Aorta (tissue), 5 donors: ENCODE measurements at regions of chr1 and their contacts with region 1.

Region 1: GRCh38 chr1:114716304-114717170 is at the start of gene NRAS:
- DNase-seq: peak; percentile 96 to 99
- ATAC-seq: peak; percentile 99
- H3K4me3 ChIP-seq: peak within 1 kb of the TSS; percentile 91 to 99
- H3K27ac ChIP-seq: peak within 1 kb of the TSS; percentile 68 to 79
- H3K4me1 ChIP-seq: no peaks in the 10 kb centered on the region
- H3K27me3 ChIP-seq: no peaks in the 10 kb centered on the region
- total RNA-seq, gene NRAS: 17.9 to 21.1 TPM

Region 2: GRCh38 chr1:114581335-114582287 is 134.9 kb before region 1 on chr1 and contains the start of gene BCAS2:
- intact Hi-C with region 1: loop called in 1 of 2 experiments (anchors 10 kb)
- DNase-seq: peak; percentile 97 to 98
- ATAC-seq: peak; percentile 98
- H3K4me3 ChIP-seq: peak within 1 kb of the TSS; percentile 32 to 89
- H3K27ac ChIP-seq: peak within 1 kb of the TSS; percentile 15 to 71
- H3K4me1 ChIP-seq: peaks cover 0 to 4% of the 10 kb centered on the region in 2 donors
- H3K27me3 ChIP-seq: no peaks in the 10 kb centered on the region
- total RNA-seq, gene BCAS2: 23.9 to 29.8 TPM

Region 3: GRCh38 chr1:114670083-114671010 is 46.2 kb before region 1 on chr1:
- intact Hi-C with region 1: loop called in 1 of 2 experiments (anchors 5 kb)
- DNase-seq: peak; percentile 96 to 98
- ATAC-seq: peak; percentile 100
- H3K4me3 ChIP-seq: peak overlapping the region; percentile 65 to 97
- H3K27ac ChIP-seq: peak overlapping the region in 1 of 2 donors; percentile 24
- H3K4me1 ChIP-seq: no peaks in the 10 kb centered on the region
- H3K27me3 ChIP-seq: no peaks in the 10 kb centered on the region

Region 4: GRCh38 chr1:114757455-114758250 is 41.1 kb after region 1 on chr1 and contains the start of gene CSDE1:
- intact Hi-C with region 1: loop called in 1 of 2 experiments (anchors 5 kb)
- DNase-seq: peak; percentile 98 to 99
- ATAC-seq: peak; percentile 100
- H3K4me3 ChIP-seq: peak within 1 kb of the TSS; percentile 75 to 94
- H3K27ac ChIP-seq: peak within 1 kb of the TSS; percentile 87 to 95
- H3K4me1 ChIP-seq: peaks cover 0 to 2% of the 10 kb centered on the region in 2 donors
- H3K27me3 ChIP-seq: no peaks in the 10 kb centered on the region
- total RNA-seq, gene CSDE1: 549 to 607 TPM

Region 5: GRCh38 chr1:114780344-114781226 is 64.0 kb after region 1 on chr1 and contains the start of gene SIKE1:
- intact Hi-C with region 1: loop called in 1 of 2 experiments (anchors 2 kb)
- DNase-seq: peak; percentile 94 to 95
- ATAC-seq: peak; percentile 95
- H3K4me3 ChIP-seq: peak within 1 kb of the TSS; percentile 7 to 44
- H3K27ac ChIP-seq: peak within 1 kb of the TSS; percentile 24 to 50
- H3K4me1 ChIP-seq: peaks cover 0 to 2% of the 10 kb centered on the region in 2 donors
- H3K27me3 ChIP-seq: no peaks in the 10 kb centered on the region
- total RNA-seq, gene SIKE1: 31.4 to 40.1 TPM